Uterus (tissue), 4 donors: ENCODE measurements at regions of chr18 and their contacts with region 1.

Region 1: DNA sequence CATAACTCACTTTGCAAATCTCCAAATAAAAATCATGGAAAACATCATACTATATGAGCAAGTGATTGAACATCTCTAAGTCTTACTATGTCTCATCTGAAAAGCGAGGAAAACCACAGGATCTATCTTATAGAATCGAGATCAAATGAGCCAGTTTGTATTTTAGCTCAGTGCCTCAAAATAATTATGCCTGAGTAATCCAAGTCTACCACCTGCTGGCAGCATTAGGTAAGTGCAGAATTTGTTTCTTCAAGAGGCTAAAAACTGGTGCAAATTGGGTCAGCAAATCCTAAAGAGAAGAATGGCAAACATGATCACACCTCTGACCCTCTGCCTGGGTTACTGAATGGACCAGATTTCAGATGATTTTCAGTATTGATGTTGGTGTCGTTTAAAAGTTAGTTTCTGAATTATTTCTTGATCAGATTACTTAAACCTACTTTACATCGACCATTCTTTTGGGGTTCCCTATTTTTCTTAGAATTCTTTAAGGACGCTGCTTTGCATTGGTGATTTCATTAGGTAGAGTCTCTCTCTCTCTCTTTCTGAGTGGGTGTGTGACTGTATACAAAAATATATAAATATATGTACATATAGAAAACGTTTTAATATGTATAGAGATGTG is 12.7 kb upstream of the FHOD3 start:
- DNase-seq: peak in 1 of 2 donors; percentile 51
- H3K4me3 ChIP-seq: no peak overlapping the region
- H3K27ac ChIP-seq: no peak overlapping the region
- H3K4me1 ChIP-seq: no peaks in the 10 kb centered on the region
- H3K27me3 ChIP-seq: no peaks in the 10 kb centered on the region
- CTCF ChIP-seq: peak; percentile 83 to 92 (median 88)
- POLR2A ChIP-seq: no peak

Region 2: GRCh38 chr18:35934002-35934401 is 350.8 kb before region 1 on chr18:
- intact Hi-C with region 1: no loop called
- DNase-seq: no peak
- H3K4me3 ChIP-seq: no peak overlapping the region
- H3K27ac ChIP-seq: no peak overlapping the region
- H3K4me1 ChIP-seq: no peaks in the 10 kb centered on the region
- H3K27me3 ChIP-seq: no peaks in the 10 kb centered on the region
- CTCF ChIP-seq: no peak
- POLR2A ChIP-seq: no peak

Region 3: DNA sequence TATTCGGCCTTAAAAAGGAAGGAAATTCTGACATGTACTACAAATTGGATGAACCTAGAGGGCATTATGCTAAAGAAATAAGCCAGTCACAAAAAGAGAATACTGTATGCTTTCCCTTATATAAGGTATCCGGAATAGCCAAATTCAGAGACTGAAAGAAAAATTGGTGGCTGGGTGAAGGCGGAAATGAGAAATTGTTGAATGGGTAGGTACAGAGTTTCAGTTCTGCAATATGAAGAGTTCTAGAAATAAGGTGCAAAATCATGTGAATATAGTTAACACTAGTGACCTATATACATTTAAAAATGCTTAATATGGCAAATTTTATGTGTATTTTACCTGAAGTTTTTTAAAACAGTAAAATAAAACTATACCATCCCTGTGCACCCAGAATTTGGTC is 269.2 kb before region 1 on chr18:
- intact Hi-C with region 1: loop called (anchors 10 kb)
- DNase-seq: no peak
- H3K4me3 ChIP-seq: no peak overlapping the region
- H3K27ac ChIP-seq: no peak overlapping the region
- H3K4me1 ChIP-seq: no peaks in the 10 kb centered on the region
- H3K27me3 ChIP-seq: no peaks in the 10 kb centered on the region
- CTCF ChIP-seq: no peak
- POLR2A ChIP-seq: no peak

Region 4: DNA sequence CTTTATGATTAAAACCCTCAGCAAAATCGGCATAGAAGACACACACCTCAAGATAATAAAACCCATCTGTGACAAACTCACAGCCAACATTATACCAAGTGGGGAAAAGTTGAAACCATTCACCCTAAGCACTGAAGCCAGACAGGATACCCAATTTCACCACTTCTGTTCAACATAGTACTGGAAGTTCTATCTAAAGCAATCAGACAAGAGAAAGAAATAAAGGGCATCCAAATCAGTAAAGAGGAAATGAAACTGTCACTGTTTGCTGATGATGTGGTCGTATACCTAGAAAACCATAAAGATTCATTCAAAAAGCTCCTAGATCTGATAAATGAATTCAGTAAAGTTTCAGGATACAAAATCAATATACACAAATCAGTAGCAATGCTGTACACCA is 201.1 kb before region 1 on chr18:
- intact Hi-C with region 1: loop called (anchors 10 kb)
- DNase-seq: no peak
- H3K4me3 ChIP-seq: no peak overlapping the region
- H3K27ac ChIP-seq: no peak overlapping the region
- H3K4me1 ChIP-seq: no peaks in the 10 kb centered on the region
- H3K27me3 ChIP-seq: no peaks in the 10 kb centered on the region
- CTCF ChIP-seq: no peak
- POLR2A ChIP-seq: no peak

Region 5: GRCh38 chr18:36547544-36547943 is 262.8 kb after region 1 on chr18:
- intact Hi-C with region 1: no loop called
- DNase-seq: no peak
- H3K4me3 ChIP-seq: no peak overlapping the region
- H3K27ac ChIP-seq: no peak overlapping the region
- H3K4me1 ChIP-seq: no peaks in the 10 kb centered on the region
- H3K27me3 ChIP-seq: no peaks in the 10 kb centered on the region
- CTCF ChIP-seq: no peak
- POLR2A ChIP-seq: no peak

Region 6: DNA sequence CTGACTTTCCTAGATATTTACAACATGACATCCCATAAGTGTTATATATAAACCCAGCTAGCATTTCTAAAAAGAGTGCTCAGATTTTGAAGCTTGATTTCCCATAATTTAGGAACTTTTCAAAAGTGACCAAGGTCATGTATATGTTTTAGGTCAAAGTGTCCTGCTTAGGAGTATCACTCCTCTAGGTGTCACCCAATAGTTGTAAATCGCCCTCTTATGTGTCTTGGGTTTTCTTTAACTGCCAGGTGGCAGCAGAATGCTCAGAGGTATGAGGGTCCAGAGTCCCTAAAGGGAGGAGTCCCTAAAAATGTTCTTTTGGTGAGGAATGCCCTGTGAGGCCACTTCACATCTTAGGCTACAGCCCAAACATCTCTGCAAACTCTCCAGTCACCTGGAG is 922.6 kb after region 1 on chr18:
- intact Hi-C with region 1: no loop called
- DNase-seq: no peak
- H3K4me3 ChIP-seq: no peak overlapping the region
- H3K27ac ChIP-seq: no peak overlapping the region
- H3K4me1 ChIP-seq: no peaks in the 10 kb centered on the region
- H3K27me3 ChIP-seq: no peaks in the 10 kb centered on the region
- CTCF ChIP-seq: no peak
- POLR2A ChIP-seq: no peak